H1 (cell line): ENCODE measurements at regions of chr11 and their contacts with region 1.

Region 1: GRCh38 chr11:123429913-123430720 is at the start of gene GRAMD1B:
- DNase-seq: peak; percentile 54 to 87
- H3K4me3 ChIP-seq: peak within 1 kb of the TSS; percentile 68 to 88 (median 82)
- H3K27ac ChIP-seq: no peak within 1 kb of the TSS
- H3K4me1 ChIP-seq: peaks cover 12 to 18% (median 14%) of the 10 kb centered on the region in 4 experiments
- H3K27me3 ChIP-seq: peaks cover 0 to 17% (median under 1%) of the 10 kb centered on the region in 4 experiments; a peak in 4 of 7 replicates
- CTCF ChIP-seq: peak in 1 of 3 experiments; percentile 27; a peak in 1 of 4 replicates
- EP300 ChIP-seq: no peak
- POLR2A ChIP-seq: 0 out of 3 replicates have a peak, but pooled peaks of 1 of the 2 experiments have one; percentile 31
- RAD21 ChIP-seq: peak in 1 of 2 experiments; percentile 27; a peak in 3 of 4 replicates
- total RNA-seq, gene GRAMD1B: 21.2 and 22.4 TPM in 2 replicates

Region 2: DNA sequence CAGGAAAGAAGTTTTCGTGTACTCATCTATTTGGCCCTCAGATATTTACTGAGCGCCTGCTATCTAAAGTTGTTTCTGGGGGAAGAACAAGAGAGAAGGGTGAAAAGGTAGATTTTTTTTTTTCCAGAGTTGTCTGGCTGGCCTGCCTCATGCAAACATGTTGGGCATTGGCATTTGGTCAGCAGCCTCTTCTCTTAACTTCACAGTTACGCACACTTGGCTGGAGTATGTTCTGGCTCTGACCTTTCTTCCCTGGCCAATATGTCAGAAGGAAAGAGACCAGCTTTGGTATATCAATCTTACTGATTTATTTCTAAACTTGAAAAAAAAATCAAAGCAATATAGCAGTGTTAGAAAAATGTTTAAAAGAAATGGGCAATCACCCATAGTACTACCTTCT is 54.3 kb before region 1 on chr11:
- CTCF ChIA-PET with region 1: no interaction called
- POLR2A ChIA-PET with region 1: no interaction called
- DNase-seq: no peak
- H3K4me3 ChIP-seq: no peak overlapping the region
- H3K27ac ChIP-seq: no peak overlapping the region
- H3K4me1 ChIP-seq: peaks cover 2 to 14% (median 8%) of the 10 kb centered on the region in 4 experiments; a peak in 5 of 7 replicates
- H3K27me3 ChIP-seq: 0 out of 7 replicates have a peak, but pooled peaks cover 0 to under 1% (median 0%) of the 10 kb centered on the region in 4 experiments
- CTCF ChIP-seq: no peak
- EP300 ChIP-seq: no peak
- POLR2A ChIP-seq: no peak
- RAD21 ChIP-seq: no peak

Region 3: GRCh38 chr11:123413636-123414035 is 16.5 kb before region 1 on chr11:
- CTCF ChIA-PET with region 1: interaction called, 81 read pairs
- POLR2A ChIA-PET with region 1: interaction called, 4 read pairs
- DNase-seq: no peak
- H3K4me3 ChIP-seq: no peak overlapping the region
- H3K27ac ChIP-seq: no peak overlapping the region
- H3K4me1 ChIP-seq: peaks cover 0 to 4% (median under 1%) of the 10 kb centered on the region in 4 experiments; a peak in 4 of 7 replicates
- H3K27me3 ChIP-seq: no peaks in the 10 kb centered on the region; a peak in 2 of 7 replicates
- CTCF ChIP-seq: no peak
- EP300 ChIP-seq: no peak
- POLR2A ChIP-seq: no peak
- RAD21 ChIP-seq: no peak

Region 4: GRCh38 chr11:123443851-123444598 is 13.9 kb after region 1 on chr11:
- CTCF ChIA-PET with region 1: interaction called, 21 read pairs
- POLR2A ChIA-PET with region 1: interaction called, 3 read pairs
- DNase-seq: no peak
- H3K4me3 ChIP-seq: no peak overlapping the region
- H3K27ac ChIP-seq: no peak overlapping the region
- H3K4me1 ChIP-seq: peaks cover 0 to 3% (median 1%) of the 10 kb centered on the region in 4 experiments; a peak in 3 of 7 replicates
- H3K27me3 ChIP-seq: no peaks in the 10 kb centered on the region
- CTCF ChIP-seq: no peak
- EP300 ChIP-seq: no peak
- POLR2A ChIP-seq: no peak
- RAD21 ChIP-seq: no peak